ENCODE measurements at regions of chr19 and their contacts with region 1.

Region 1: GRCh38 chr19:13262450-13262849 is 112.2 kb downstream of the IER2 start:
- DNase-seq: peak; percentile 48
- H3K4me3 ChIP-seq: no peak overlapping the region
- H3K27ac ChIP-seq: no peak overlapping the region
- H3K4me1 ChIP-seq: peaks cover 16% of the 10 kb centered on the region
- H3K27me3 ChIP-seq: peaks cover 2% of the 10 kb centered on the region
- CTCF ChIP-seq: peak; percentile 49 to 53

Region 2: GRCh38 chr19:12974301-12975220 is 287.9 kb before region 1 on chr19:
- CTCF ChIA-PET with region 1: interaction called, 3 read pairs
- dilution Hi-C with region 1: no loop called
- in situ Hi-C with region 1: loop called (anchors 10 kb)
- intact Hi-C with region 1: loop called (anchors 1 kb)
- DNase-seq: no peak
- H3K4me3 ChIP-seq: no peak overlapping the region
- H3K27ac ChIP-seq: no peak overlapping the region
- H3K4me1 ChIP-seq: no peaks in the 10 kb centered on the region
- H3K27me3 ChIP-seq: peaks cover 3% of the 10 kb centered on the region
- CTCF ChIP-seq: no peak

Region 3: DNA sequence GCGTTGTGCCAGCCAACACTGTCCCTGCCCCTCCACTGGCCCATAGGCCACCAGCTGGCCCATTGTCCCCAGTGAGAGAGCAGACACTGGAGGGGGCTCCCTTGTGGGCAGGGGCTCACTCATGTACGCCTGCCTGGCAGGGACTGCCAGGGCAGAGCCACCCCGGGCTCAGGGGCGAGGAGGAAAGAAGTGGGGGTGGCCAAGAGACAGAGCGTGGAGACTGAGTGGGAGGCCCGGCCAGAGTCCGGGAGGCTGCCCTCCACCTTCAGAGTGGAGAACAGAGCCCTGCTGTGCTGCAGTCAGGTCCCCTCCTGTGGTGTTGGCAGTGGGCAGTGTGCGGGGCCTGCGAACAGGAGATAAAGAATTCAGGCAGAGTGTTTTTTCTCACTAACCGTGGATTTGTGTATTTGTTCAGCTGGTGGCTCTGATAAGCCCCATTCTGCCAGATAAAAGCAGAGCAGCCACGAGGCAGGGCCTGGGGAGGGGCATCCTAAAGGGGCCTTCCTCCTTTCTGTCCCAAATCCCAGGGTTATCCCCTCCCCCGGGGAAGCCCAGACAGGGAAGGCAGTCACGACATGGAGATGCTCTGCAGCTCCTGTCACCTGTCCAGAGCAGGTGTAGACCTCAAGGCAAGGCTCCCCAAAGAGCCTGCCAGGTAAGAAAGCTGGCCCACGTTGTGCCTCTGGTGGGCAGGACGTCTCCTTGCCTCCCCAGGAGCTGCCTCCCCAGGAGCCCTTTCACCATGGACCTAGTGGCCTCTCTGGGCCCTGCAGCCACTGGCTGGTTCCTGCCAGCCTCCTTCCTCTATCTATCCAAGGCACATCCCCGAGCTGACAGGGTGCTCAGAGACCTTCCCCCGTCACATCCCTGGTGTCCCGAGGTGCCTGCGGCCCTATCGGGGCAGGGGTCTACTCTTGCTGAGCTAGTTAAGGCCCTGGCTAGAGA is 192.8 kb before region 1 on chr19:
- CTCF ChIA-PET with region 1: no interaction called
- dilution Hi-C with region 1: loop called (anchors 5 kb)
- in situ Hi-C with region 1: no loop called
- intact Hi-C with region 1: no loop called
- DNase-seq: no peak
- H3K4me3 ChIP-seq: no peak overlapping the region
- H3K27ac ChIP-seq: no peak overlapping the region
- H3K4me1 ChIP-seq: no peaks in the 10 kb centered on the region
- H3K27me3 ChIP-seq: no peaks in the 10 kb centered on the region
- CTCF ChIP-seq: no peak

Region 4: DNA sequence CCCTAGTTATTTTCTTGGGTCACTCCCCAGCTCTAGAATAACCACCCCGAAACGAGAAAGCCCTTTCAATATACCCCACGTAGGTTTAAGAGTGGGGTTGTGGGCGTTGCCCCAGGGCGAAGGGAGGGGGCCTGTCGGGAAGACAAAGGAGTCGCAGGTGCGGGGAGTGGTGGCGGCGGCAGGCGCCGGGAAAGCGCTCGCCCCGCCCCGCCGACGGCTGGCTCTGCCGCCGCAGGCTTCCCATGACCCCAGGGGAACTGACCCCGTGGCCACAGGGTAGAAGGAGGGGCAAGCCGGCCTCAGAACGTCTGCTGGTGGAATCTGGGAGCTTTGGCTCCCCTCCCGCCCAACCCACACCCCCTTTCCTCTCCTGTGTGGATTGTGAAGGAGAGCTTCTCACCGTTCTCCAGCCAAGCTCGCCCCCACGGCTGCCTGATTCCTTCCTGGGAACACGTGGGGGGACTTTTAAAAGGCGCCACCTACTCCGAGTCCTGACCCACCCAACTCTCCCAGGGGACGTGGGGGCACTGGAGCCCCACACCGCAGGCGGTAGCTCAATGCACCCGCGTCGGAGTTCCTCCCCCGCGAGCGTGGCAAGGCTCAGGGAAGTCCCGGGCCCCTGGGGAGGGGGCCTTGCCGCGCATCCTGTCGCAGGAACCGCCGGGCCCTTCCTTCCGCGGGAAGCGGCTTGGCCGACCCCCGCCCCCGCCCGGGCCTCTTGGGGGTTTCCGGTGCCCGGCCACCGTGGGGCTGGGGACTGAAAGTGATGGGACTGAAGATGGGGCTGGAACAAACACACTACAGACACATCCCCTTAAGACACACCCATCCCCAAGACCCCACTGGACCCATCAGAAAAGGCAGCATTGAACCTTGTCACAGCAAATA is 106.7 kb before region 1 on chr19:
- CTCF ChIA-PET with region 1: no interaction called
- dilution Hi-C with region 1: loop called (anchors 5 kb)
- in situ Hi-C with region 1: no loop called
- intact Hi-C with region 1: loop called (anchors 1 kb)
- DNase-seq: peak; percentile 65
- H3K4me3 ChIP-seq: peak overlapping the region; percentile 70 to 88 (median 86)
- H3K27ac ChIP-seq: peak overlapping the region; percentile 95
- H3K4me1 ChIP-seq: peaks cover 21% of the 10 kb centered on the region
- H3K27me3 ChIP-seq: no peaks in the 10 kb centered on the region
- CTCF ChIP-seq: no peak

Region 5: GRCh38 chr19:13212759-13213330 is 49.6 kb before region 1 on chr19:
- CTCF ChIA-PET with region 1: no interaction called
- dilution Hi-C with region 1: no loop called
- in situ Hi-C with region 1: no loop called
- intact Hi-C with region 1: loop called (anchors 5 kb)
- DNase-seq: peak; percentile 33
- H3K4me3 ChIP-seq: no peak overlapping the region
- H3K27ac ChIP-seq: no peak overlapping the region
- H3K4me1 ChIP-seq: no peaks in the 10 kb centered on the region
- H3K27me3 ChIP-seq: no peaks in the 10 kb centered on the region
- CTCF ChIP-seq: peak; percentile 59 to 62

Region 6: GRCh38 chr19:13228561-13228960 is 33.9 kb before region 1 on chr19:
- CTCF ChIA-PET with region 1: no interaction called
- dilution Hi-C with region 1: no loop called
- in situ Hi-C with region 1: no loop called
- intact Hi-C with region 1: no loop called
- DNase-seq: no peak
- H3K4me3 ChIP-seq: no peak overlapping the region
- H3K27ac ChIP-seq: no peak overlapping the region
- H3K4me1 ChIP-seq: no peaks in the 10 kb centered on the region
- H3K27me3 ChIP-seq: no peaks in the 10 kb centered on the region
- CTCF ChIP-seq: no peak

Measured in mammary epithelial cell (primary cell).